ENCODE measurements at regions of chr16 and their contacts with region 1.

Region 1: GRCh38 chr16:30844671-30845449 is 49.0 kb downstream of the BCL7C start:
- DNase-seq: peak; percentile 83 to 87
- H3K4me3 ChIP-seq: no peak overlapping the region
- H3K4me3 Mint-ChIP-seq: no peak overlapping the region
- H3K27ac Mint-ChIP-seq: no peak overlapping the region
- H3K4me1 ChIP-seq: peaks cover 11% of the 10 kb centered on the region
- H3K4me1 Mint-ChIP-seq: peaks cover 5% of the 10 kb centered on the region
- H3K27me3 ChIP-seq: no peaks in the 10 kb centered on the region
- H3K27me3 Mint-ChIP-seq: no peaks in the 10 kb centered on the region
- CTCF ChIP-seq: peak; percentile 78 to 84

Region 2: GRCh38 chr16:30797670-30798309 is 47.1 kb before region 1 on chr16:
- CTCF ChIA-PET with region 1: no interaction called
- POLR2A ChIA-PET with region 1: no interaction called
- intact Hi-C with region 1: no loop called
- DNase-seq: no peak
- H3K4me3 ChIP-seq: no peak overlapping the region
- H3K4me3 Mint-ChIP-seq: no peak overlapping the region
- H3K27ac Mint-ChIP-seq: no peak overlapping the region
- H3K4me1 ChIP-seq: no peaks in the 10 kb centered on the region
- H3K4me1 Mint-ChIP-seq: no peaks in the 10 kb centered on the region
- H3K27me3 ChIP-seq: no peaks in the 10 kb centered on the region
- H3K27me3 Mint-ChIP-seq: no peaks in the 10 kb centered on the region
- CTCF ChIP-seq: peak in 1 of 2 experiments; percentile 16

Region 3: GRCh38 chr16:30867747-30868146 is 22.9 kb after region 1 on chr16:
- CTCF ChIA-PET with region 1: interaction called, 10 read pairs
- POLR2A ChIA-PET with region 1: no interaction called
- intact Hi-C with region 1: no loop called
- DNase-seq: no peak
- H3K4me3 ChIP-seq: no peak overlapping the region
- H3K4me3 Mint-ChIP-seq: no peak overlapping the region
- H3K27ac Mint-ChIP-seq: no peak overlapping the region
- H3K4me1 ChIP-seq: no peaks in the 10 kb centered on the region
- H3K4me1 Mint-ChIP-seq: no peaks in the 10 kb centered on the region
- H3K27me3 ChIP-seq: no peaks in the 10 kb centered on the region
- H3K27me3 Mint-ChIP-seq: no peaks in the 10 kb centered on the region
- CTCF ChIP-seq: peak in 1 of 2 experiments; percentile 31

Region 4: DNA sequence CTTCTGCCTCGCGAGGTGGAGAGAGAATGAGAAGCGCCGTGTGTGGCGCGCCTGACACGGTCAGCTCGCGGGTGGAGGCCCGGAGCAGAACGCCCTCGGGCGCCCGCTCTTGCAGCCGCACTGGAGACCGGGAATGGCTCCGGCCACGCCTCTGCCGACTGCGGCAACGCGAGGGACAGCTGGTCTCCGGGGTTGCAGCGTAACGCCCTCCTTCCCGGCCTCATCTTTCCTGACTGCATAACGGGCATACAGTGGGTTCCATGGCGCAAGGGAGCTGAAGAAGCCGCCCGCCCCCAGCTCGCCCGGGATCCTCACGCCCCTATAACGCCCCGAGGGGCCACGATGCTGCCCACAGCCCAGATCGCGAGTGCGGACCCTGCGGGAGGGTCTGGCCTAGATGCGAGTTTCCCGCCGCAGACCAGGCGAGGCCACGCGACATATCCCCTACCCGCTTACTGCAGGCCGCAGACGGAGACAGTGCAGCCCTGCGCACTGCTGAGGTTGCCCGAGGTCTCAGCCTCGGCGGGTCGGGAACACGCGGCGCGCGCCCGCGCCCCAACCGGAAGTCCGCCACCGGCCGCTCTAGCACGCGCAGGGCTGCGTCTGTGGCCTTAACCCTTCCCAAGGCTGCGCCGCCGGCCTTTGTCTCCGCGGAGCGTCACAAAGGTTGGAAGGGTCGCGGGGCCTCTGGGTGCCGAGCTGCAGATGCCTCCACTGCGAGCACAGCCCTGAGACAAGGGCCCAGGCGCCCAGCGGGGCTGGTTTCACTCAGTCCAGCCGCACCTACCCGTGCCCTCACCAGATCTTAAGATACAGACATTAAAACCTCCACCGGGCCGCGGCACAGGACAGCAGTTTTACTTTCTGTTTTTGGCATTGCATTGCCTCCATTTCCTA is 30.2 kb after region 1 on chr16:
- CTCF ChIA-PET with region 1: interaction called, 7 read pairs
- POLR2A ChIA-PET with region 1: no interaction called
- intact Hi-C with region 1: loop called (anchors 1 kb)
- DNase-seq: peak; percentile 91 to 92
- H3K4me3 ChIP-seq: peak overlapping the region; percentile 98
- H3K4me3 Mint-ChIP-seq: peak overlapping the region; percentile 89
- H3K27ac Mint-ChIP-seq: peak overlapping the region; percentile 86
- H3K4me1 ChIP-seq: peaks cover 9% of the 10 kb centered on the region
- H3K4me1 Mint-ChIP-seq: peaks cover 12% of the 10 kb centered on the region
- H3K27me3 ChIP-seq: no peaks in the 10 kb centered on the region
- H3K27me3 Mint-ChIP-seq: no peaks in the 10 kb centered on the region
- CTCF ChIP-seq: no peak

Region 5: GRCh38 chr16:30896889-30897733 is 52.3 kb after region 1 on chr16:
- CTCF ChIA-PET with region 1: interaction called, 12 read pairs
- POLR2A ChIA-PET with region 1: no interaction called
- intact Hi-C with region 1: loop called (anchors 1 kb)
- DNase-seq: peak; percentile 57 to 58
- H3K4me3 ChIP-seq: peak overlapping the region; percentile 41
- H3K4me3 Mint-ChIP-seq: peak overlapping the region; percentile 90
- H3K27ac Mint-ChIP-seq: peak overlapping the region; percentile 83
- H3K4me1 ChIP-seq: peaks cover 30% of the 10 kb centered on the region
- H3K4me1 Mint-ChIP-seq: peaks cover 23% of the 10 kb centered on the region
- H3K27me3 ChIP-seq: no peaks in the 10 kb centered on the region
- H3K27me3 Mint-ChIP-seq: no peaks in the 10 kb centered on the region
- CTCF ChIP-seq: no peak

Region 6: DNA sequence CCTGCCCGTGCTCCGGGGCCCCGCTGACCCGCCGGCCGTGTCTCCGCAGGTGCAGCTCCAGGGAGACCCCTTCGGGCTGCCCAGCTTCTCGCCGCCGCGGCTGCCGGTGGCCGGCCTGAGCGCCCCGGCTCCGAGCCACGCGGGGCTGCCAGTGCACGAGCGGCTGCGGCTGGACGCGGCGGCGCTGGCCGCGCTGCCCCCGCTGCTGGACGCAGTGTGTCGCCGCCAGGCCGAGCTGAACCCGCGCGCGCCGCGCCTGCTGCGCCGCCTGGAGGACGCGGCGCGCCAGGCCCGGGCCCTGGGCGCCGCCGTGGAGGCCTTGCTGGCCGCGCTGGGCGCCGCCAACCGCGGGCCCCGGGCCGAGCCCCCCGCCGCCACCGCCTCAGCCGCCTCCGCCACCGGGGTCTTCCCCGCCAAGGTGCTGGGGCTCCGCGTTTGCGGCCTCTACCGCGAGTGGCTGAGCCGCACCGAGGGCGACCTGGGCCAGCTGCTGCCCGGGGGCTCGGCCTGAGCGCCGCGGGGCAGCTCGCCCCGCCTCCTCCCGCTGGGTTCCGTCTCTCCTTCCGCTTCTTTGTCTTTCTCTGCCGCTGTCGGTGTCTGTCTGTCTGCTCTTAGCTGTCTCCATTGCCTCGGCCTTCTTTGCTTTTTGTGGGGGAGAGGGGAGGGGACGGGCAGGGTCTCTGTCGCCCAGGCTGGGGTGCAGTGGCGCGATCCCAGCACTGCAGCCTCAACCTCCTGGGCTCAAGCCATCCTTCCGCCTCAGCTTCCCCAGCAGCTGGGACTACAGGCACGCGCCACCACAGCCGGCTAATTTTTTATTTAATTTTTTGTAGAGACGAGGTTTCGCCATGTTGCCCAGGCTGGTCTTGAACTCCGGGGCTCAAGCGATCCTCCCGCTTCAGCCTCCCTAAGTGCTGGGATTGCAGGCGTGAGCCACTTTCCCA is 57.4 kb after region 1 on chr16:
- CTCF ChIA-PET with region 1: interaction called, 12 read pairs
- POLR2A ChIA-PET with region 1: no interaction called
- intact Hi-C with region 1: no loop called
- DNase-seq: peak in 1 of 2 experiments; percentile 66
- H3K4me3 ChIP-seq: peak overlapping the region; percentile 38
- H3K4me3 Mint-ChIP-seq: peak overlapping the region; percentile 79
- H3K27ac Mint-ChIP-seq: peak overlapping the region; percentile 6
- H3K4me1 ChIP-seq: no peaks in the 10 kb centered on the region
- H3K4me1 Mint-ChIP-seq: peaks cover 9% of the 10 kb centered on the region
- H3K27me3 ChIP-seq: no peaks in the 10 kb centered on the region
- H3K27me3 Mint-ChIP-seq: no peaks in the 10 kb centered on the region
- CTCF ChIP-seq: no peak

Region 7: DNA sequence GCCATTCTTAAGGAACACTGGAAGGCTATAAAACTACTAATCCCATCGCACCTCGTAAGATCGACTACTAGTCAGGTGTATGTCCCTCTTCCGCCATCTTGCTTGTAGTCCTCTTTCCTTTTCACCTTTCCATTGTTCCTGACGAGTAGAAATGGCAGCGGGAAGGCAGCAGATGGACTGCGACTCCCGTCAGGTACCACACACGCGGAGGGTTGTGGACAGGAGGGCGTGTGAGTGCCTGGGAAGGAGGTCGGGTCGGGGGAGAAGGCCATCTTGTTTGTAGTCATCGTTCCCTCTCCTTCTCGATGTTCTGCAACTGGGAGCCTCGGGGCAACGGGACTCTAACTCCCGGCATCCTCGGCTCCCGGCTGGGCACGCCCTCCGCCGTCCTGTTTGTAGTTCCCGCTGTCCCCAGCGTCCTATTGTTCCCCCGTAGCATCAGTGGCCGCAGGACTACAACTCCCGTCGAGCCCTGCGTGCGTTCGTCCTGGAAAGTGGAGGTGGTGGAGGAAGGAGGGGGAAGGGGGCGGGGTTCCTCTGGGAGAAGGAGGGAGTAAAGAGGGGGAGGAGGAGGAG is 78.2 kb after region 1 on chr16:
- CTCF ChIA-PET with region 1: interaction called, 4 read pairs
- POLR2A ChIA-PET with region 1: no interaction called
- intact Hi-C with region 1: loop called (anchors 1 kb)
- DNase-seq: peak; percentile 97 to 99
- H3K4me3 ChIP-seq: peak overlapping the region; percentile 49
- H3K4me3 Mint-ChIP-seq: peak overlapping the region; percentile 100
- H3K27ac Mint-ChIP-seq: peak overlapping the region; percentile 100
- H3K4me1 ChIP-seq: no peaks in the 10 kb centered on the region
- H3K4me1 Mint-ChIP-seq: no peaks in the 10 kb centered on the region
- H3K27me3 ChIP-seq: no peaks in the 10 kb centered on the region
- H3K27me3 Mint-ChIP-seq: no peaks in the 10 kb centered on the region
- CTCF ChIP-seq: no peak

Region 8: GRCh38 chr16:30941600-30942425 is 97.0 kb after region 1 on chr16:
- CTCF ChIA-PET with region 1: interaction called, 13 read pairs
- POLR2A ChIA-PET with region 1: interaction called, 5 read pairs
- intact Hi-C with region 1: loop called (anchors 1 kb)
- DNase-seq: peak; percentile 70 to 82
- H3K4me3 ChIP-seq: no peak overlapping the region
- H3K4me3 Mint-ChIP-seq: no peak overlapping the region
- H3K27ac Mint-ChIP-seq: no peak overlapping the region
- H3K4me1 ChIP-seq: peaks cover 7% of the 10 kb centered on the region; the same call in 1 of the 2 replicates
- H3K4me1 Mint-ChIP-seq: no peaks in the 10 kb centered on the region
- H3K27me3 ChIP-seq: no peaks in the 10 kb centered on the region
- H3K27me3 Mint-ChIP-seq: no peaks in the 10 kb centered on the region
- CTCF ChIP-seq: peak; percentile 80 to 91